Adrenal gland (tissue), 19 donors: ENCODE measurements at regions of chr17 and their contacts with region 1.

Region 1: GRCh38 chr17:9522074-9522473 is 53.5 kb downstream of the STX8 start:
- DNase-seq: peak in 2 of 7 donors; percentile 24 to 25
- H3K4me3 ChIP-seq: no peak overlapping the region
- H3K27ac ChIP-seq: no peak overlapping the region
- H3K4me1 ChIP-seq: no peaks in the 10 kb centered on the region
- H3K27me3 ChIP-seq: no peaks in the 10 kb centered on the region
- CTCF ChIP-seq: peak; percentile 21 to 67 (median 56)
- POLR2A ChIP-seq: no peak

Region 2: DNA sequence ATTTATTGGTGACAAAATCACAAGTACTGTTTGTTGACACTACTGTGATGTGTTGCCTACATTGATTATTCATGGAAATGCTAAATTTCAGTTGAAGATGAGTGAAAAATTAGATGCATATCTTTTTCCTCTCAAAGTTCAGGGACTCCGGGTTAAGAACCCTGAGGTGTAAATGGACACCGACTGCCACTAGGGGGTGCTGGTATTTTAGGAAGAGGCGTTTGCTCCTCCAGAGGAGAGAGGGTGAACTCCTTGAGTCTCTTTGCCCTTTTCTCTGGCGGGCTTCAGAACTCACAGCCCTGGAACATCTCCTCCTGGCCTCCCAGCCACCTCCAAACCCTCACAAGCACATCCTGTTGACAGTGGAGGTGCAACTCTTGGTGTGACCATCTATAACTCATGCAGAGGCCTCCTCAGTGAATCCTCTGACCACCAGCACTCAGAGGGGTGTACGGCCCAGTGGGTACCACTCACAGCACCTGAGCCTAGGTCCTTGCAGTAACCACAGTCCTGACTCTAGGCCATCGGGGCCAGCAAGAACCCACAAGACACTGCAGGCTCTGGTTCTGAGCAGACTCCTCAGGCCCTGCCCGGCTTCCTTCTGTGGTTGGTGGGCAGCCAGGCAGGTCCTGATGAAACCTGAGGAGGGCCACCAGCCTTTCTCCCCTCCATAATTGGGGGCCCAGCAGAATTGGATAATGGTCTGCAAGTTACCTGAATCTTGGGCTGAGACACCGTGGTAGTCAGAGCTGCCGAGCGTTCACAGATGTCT is 530.4 kb before region 1 on chr17:
- intact Hi-C with region 1: loop called (anchors 5 to 10 kb)
- DNase-seq: peak; percentile 49 to 79 (median 60)
- H3K4me3 ChIP-seq: no peak overlapping the region
- H3K27ac ChIP-seq: no peak overlapping the region
- H3K4me1 ChIP-seq: no peaks in the 10 kb centered on the region
- H3K27me3 ChIP-seq: peaks cover 4% of the 10 kb centered on the region
- CTCF ChIP-seq: peak; percentile 51 to 79 (median 69)
- POLR2A ChIP-seq: no peak

Region 3: GRCh38 chr17:8997994-8998628 is 524.0 kb before region 1 on chr17:
- intact Hi-C with region 1: loop called (anchors 5 to 10 kb)
- DNase-seq: peak; percentile 38 to 70 (median 61)
- H3K4me3 ChIP-seq: no peak overlapping the region
- H3K27ac ChIP-seq: no peak overlapping the region
- H3K4me1 ChIP-seq: no peaks in the 10 kb centered on the region
- H3K27me3 ChIP-seq: peaks cover 18% of the 10 kb centered on the region
- CTCF ChIP-seq: peak; percentile 55 to 79 (median 74)
- POLR2A ChIP-seq: no peak

Region 4: DNA sequence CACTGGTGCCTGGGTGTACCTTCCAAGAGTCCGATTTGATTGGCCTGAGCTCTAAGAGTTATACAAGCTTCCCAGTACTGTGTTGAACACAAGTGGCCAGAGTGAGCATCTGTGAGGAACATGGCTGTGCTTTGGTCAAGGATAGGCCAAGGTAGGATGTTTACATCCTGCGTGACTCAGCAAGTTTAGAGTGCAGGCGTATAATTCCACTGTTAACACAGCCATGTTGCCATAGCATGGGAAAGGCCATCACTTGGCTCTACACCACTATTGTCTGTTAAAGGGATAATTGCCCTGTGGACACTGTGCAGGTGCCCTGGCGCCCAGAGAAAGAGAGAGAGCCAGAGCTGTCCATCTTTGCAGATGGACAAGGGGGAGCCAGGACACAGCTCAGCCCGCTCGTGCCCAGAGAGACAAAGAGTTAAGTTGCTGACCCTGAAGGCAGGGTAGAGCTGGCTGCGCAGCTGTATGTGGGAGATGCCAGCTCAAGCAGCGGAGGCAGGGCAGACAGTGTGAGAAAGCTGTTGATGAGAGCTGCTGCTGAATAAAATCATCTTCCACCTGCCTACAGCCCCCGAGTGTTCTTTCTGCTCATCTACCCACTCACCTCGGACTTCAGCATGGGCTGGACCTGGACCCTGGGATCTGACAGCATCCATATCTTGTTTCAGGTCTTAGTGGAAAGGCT is 66.0 kb after region 1 on chr17:
- intact Hi-C with region 1: no loop called
- DNase-seq: no peak
- H3K4me3 ChIP-seq: no peak overlapping the region
- H3K27ac ChIP-seq: no peak overlapping the region
- H3K4me1 ChIP-seq: no peaks in the 10 kb centered on the region
- H3K27me3 ChIP-seq: no peaks in the 10 kb centered on the region
- CTCF ChIP-seq: no peak
- POLR2A ChIP-seq: no peak